Activated CD4-positive, alpha-beta memory T cell treated with anti-CD3 and anti-CD28 coated beads for 36 hours (primary cell): ENCODE measurements at regions of chr14 and their contacts with region 1.

Region 1: DNA sequence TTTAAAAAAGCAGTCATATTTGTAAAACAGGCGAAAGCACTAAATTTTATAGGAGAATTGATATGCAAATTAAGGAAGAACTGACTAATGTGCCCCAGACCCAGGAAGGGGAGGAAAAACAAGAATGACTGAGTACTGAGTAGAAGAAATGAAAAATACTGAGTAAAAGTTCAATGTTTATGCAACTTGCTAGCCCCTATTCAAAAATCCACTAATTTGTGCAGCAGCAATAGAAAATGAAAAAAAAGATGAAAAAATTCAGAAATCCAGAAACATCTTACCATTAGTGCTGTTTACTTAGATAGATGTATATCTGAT is 6.1 kb downstream of the CHD8 start:
- DNase-seq: no peak
- H3K4me3 Mint-ChIP-seq: peak overlapping the region; percentile 16
- H3K27ac Mint-ChIP-seq: peak overlapping the region; percentile 91
- H3K4me1 Mint-ChIP-seq: peaks cover 68% of the 10 kb centered on the region
- H3K27me3 Mint-ChIP-seq: no peaks in the 10 kb centered on the region

Region 2: DNA sequence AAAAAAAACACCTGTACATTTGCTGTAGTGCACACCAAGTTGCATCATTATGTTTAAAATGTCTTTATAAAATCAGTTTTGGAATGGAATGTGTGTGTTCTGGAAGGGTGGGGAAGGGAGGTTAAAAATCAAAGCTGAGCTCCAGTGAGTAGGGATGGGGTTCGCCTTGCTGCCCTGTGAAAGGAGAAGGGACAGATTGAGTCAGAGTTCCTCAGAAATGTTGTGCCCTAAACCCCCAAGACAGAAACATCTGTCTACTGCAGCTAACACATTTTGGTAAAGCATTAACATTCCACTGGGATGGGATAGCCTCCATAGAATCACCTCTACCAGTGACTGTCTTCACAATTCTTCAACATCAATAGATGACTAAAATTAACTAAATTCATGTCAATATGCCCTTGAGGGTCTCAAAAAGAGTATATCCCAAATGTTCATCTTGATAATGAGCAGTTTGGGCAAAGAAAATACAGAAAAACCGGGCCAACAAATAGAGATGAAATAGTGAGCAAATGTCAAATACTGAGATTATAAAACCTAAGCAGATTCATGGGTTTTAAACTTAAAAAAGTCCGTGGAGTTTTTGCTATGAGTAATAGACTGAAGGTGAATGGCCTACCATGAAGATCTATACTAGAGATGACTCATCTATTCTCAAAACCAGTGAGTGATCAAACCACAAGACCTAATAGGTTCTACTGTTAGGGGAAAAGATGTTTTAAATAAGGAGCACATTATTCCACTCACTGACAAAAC is 186.0 kb before region 1 on chr14:
- CTCF ChIA-PET with region 1: interaction called, 3 read pairs
- POLR2A ChIA-PET with region 1: no interaction called
- intact Hi-C with region 1: loop called (anchors 1 kb)
- DNase-seq: no peak
- H3K4me3 Mint-ChIP-seq: peak overlapping the region; percentile 100
- H3K27ac Mint-ChIP-seq: peak overlapping the region; percentile 100
- H3K4me1 Mint-ChIP-seq: peaks cover 67% of the 10 kb centered on the region
- H3K27me3 Mint-ChIP-seq: no peaks in the 10 kb centered on the region

Region 3: GRCh38 chr14:21414137-21414631 is 35.7 kb before region 1 on chr14:
- CTCF ChIA-PET with region 1: interaction called, 12 read pairs
- POLR2A ChIA-PET with region 1: interaction called, 4 read pairs
- intact Hi-C with region 1: loop called (anchors 1 kb)
- DNase-seq: no peak
- H3K4me3 Mint-ChIP-seq: no peak overlapping the region
- H3K27ac Mint-ChIP-seq: peak overlapping the region; percentile 89
- H3K4me1 Mint-ChIP-seq: peaks cover 30% of the 10 kb centered on the region
- H3K27me3 Mint-ChIP-seq: no peaks in the 10 kb centered on the region

Region 4: DNA sequence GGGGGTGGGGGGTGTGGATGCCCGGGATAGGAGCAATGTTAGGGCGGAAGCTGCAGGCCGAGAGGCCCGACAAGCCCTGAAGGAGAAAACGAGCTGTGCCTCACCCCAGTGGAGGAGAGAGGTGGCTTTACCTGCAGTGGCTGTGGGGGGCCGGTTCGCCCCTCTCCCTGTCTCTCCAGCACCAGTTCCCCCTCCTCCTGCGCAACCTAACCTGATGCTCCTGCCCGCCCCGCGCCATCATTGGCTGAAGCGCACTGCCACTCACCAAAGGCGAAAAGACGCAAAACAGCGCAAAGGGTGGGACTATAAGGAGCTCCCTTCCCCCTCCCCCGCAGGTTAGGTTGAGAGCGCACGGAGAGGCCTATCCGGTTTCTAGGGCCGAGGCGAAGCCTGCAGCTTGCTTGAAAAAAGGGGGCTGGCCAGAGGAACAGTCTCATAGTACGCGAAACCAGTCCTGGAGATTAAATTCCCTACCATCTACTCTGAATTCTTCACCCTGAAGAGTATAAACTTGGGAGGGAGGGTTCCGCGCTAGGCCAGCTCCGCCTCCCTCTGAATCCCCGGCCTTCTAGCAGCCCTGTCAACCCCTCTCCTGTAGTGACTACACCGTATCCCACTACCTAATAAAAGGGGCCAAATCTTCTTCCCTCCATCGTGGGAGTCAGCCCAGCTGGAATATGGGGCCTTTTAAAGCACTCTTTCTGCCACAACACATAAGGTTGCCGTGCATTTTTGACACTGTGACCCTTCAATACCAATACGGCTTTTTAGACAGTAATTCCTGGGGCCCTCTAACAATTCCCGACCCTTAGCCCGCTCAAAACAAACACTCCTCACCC is 12.6 kb before region 1 on chr14:
- CTCF ChIA-PET with region 1: interaction called, 27 read pairs
- POLR2A ChIA-PET with region 1: interaction called, 30 read pairs
- intact Hi-C with region 1: loop called (anchors 1 kb)
- DNase-seq: peak; percentile 99
- H3K4me3 Mint-ChIP-seq: peak overlapping the region; percentile 80
- H3K27ac Mint-ChIP-seq: peak overlapping the region; percentile 71
- H3K4me1 Mint-ChIP-seq: peaks cover 52% of the 10 kb centered on the region
- H3K27me3 Mint-ChIP-seq: no peaks in the 10 kb centered on the region